ENCODE measurements at regions of chr6 and their contacts with region 1.

Region 1: GRCh38 chr6:29847871-29848630 is 20.4 kb downstream of the HLA-G start:
- DNase-seq: peak; percentile 79 to 93 (median 91)
- ATAC-seq: peak; percentile 89 to 92
- H3K4me3 ChIP-seq: no peak overlapping the region
- H3K27ac ChIP-seq: no peak overlapping the region
- H3K4me1 ChIP-seq: no peaks in the 10 kb centered on the region
- H3K27me3 ChIP-seq: peaks cover 3% of the 10 kb centered on the region

Region 2: DNA sequence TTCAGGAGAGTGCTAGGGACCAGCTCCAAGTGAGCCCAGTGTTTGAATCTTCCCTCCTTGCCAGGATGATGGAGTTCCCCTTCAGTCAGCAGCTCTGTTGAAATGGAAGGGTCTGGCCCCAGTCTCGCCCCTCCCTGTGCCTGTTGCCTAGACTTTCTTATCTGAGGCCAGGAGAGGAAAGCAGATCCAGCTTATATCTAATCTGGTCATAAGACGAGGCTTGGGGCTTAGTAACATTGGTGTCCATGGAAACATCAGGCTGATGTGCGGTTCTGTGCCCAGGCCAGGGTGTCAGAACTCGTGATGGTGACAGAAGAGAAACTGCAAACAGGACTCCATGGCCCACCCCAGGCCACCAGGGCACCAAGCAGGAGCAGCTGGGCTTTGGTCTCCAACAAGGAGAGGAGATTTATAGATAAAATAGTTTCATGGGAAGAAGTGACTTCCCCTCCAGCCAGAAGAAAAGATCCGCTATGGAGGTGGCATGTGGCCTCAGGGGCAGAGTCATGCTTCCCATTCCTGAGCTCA is 370.1 kb before region 1 on chr6:
- intact Hi-C with region 1: no loop called
- DNase-seq: no peak
- ATAC-seq: no peak
- H3K4me3 ChIP-seq: no peak overlapping the region
- H3K27ac ChIP-seq: no peak overlapping the region
- H3K4me1 ChIP-seq: no peaks in the 10 kb centered on the region
- H3K27me3 ChIP-seq: no peaks in the 10 kb centered on the region

Region 3: DNA sequence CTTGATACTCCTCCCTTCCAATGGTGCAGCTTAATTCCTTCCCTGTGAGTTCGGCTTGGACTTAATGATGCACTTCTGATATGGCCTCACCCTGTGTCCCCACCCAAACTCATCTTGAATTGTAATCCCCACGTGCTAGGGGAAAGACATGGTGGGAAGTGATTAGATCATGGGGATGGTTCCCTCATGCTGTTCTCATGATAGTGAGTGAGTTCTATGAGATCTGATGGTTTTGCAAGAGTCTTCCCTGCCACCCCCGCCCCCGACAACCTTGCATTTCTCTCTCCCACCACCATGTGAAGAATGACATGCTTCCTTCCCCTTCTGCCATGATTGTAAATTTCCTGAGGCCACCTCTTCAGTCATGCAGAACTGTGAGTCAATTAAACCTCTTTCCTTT is 70.7 kb before region 1 on chr6:
- intact Hi-C with region 1: no loop called
- DNase-seq: no peak
- ATAC-seq: no peak
- H3K4me3 ChIP-seq: no peak overlapping the region
- H3K27ac ChIP-seq: no peak overlapping the region
- H3K4me1 ChIP-seq: no peaks in the 10 kb centered on the region
- H3K27me3 ChIP-seq: no peaks in the 10 kb centered on the region

Region 4: GRCh38 chr6:30013291-30013922 is 165.4 kb after region 1 on chr6:
- intact Hi-C with region 1: loop called (anchors 1 to 5 kb)
- DNase-seq: peak in 2 of 3 donors; percentile 27 to 87
- ATAC-seq: peak; percentile 62 to 75
- H3K4me3 ChIP-seq: no peak overlapping the region
- H3K27ac ChIP-seq: no peak overlapping the region
- H3K4me1 ChIP-seq: no peaks in the 10 kb centered on the region
- H3K27me3 ChIP-seq: no peaks in the 10 kb centered on the region